ENCODE measurements at regions of chr18 and their contacts with region 1.

Region 1: GRCh38 chr18:29171892-29172755 is 995.2 kb upstream of the CDH2 start:
- DNase-seq: no peak
- ATAC-seq: no peak

Region 2: GRCh38 chr18:29096079-29096770 is 75.9 kb before region 1 on chr18:
- intact Hi-C with region 1: loop called (anchors 10 kb)
- DNase-seq: no peak
- ATAC-seq: no peak

Region 3: GRCh38 chr18:29309366-29309765 is 137.2 kb after region 1 on chr18:
- intact Hi-C with region 1: no loop called
- DNase-seq: no peak
- ATAC-seq: no peak

Measured in left ventricle myocardium superior (tissue), 1 donor.